ENCODE measurements at regions of chr2 and their contacts with region 1.

Region 1: DNA sequence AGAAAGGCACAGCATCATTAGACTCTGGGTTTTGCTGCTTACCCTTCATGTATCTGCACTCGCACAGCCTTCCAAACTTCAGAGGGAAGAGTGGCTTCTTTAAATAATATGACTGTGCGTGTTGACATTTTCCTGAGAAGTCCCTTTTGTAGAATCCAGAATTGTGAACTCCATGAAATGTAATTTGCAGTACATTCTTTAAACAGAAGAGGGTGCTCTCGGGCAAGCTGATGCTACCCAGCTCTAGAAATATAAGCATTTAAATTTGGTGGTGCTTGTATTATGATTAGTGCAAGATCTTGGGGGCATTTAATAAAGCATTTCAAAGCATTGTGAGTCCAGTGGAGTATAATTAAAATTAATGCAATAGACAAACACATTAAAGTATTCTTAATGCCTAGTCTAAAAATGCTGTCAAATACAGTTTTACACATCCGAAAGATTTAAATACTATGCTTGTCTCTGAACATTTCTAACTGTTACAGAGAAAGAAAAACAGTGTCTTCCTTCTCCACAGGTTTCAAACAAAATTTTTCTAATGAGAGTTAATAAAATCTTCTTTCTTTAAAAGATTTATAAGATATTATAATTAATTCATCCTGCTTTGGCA is 17.3 kb upstream of the GTF2A1L start:
- DNase-seq: peak; percentile 26
- CTCF ChIP-seq: peak; percentile 69

Region 2: GRCh38 chr2:48272199-48272598 is 328.1 kb before region 1 on chr2:
- CTCF ChIA-PET with region 1: no interaction called
- POLR2A ChIA-PET with region 1: no interaction called
- DNase-seq: no peak
- CTCF ChIP-seq: no peak

Region 3: GRCh38 chr2:48589170-48589767 is 11.0 kb before region 1 on chr2:
- CTCF ChIA-PET with region 1: interaction called, 22 read pairs
- POLR2A ChIA-PET with region 1: no interaction called
- DNase-seq: peak; percentile 25
- CTCF ChIP-seq: peak; percentile 60

Measured in GM10248 (cell line).